ENCODE measurements at regions of chr17 and their contacts with region 1.

Region 1: GRCh38 chr17:36072431-36073121 is 8.5 kb downstream of the CCL18 start:
- DNase-seq: peak; percentile 39 to 72 (median 48)
- H3K4me3 ChIP-seq: no peak overlapping the region
- H3K27ac ChIP-seq: no peak overlapping the region
- H3K4me1 ChIP-seq: no peaks in the 10 kb centered on the region
- H3K27me3 ChIP-seq: no peaks in the 10 kb centered on the region
- CTCF ChIP-seq: peak; percentile 42 to 73 (median 60)
- POLR2A ChIP-seq: no peak

Region 2: GRCh38 chr17:35969558-35970380 is 102.8 kb before region 1 on chr17:
- intact Hi-C with region 1: loop called in 1 of 2 experiments (anchors 10 kb)
- DNase-seq: peak; percentile 71 to 94 (median 85)
- H3K4me3 ChIP-seq: no peak overlapping the region
- H3K27ac ChIP-seq: no peak overlapping the region
- H3K4me1 ChIP-seq: peaks cover 0 to 16% of the 10 kb centered on the region in 2 donors
- H3K27me3 ChIP-seq: no peaks in the 10 kb centered on the region
- CTCF ChIP-seq: peak; percentile 83 to 90 (median 86)
- POLR2A ChIP-seq: no peak

Region 3: GRCh38 chr17:36127199-36127893 is 54.8 kb after region 1 on chr17:
- intact Hi-C with region 1: loop called in 1 of 2 experiments (anchors 10 kb)
- DNase-seq: no peak
- H3K4me3 ChIP-seq: no peak overlapping the region
- H3K27ac ChIP-seq: no peak overlapping the region
- H3K4me1 ChIP-seq: no peaks in the 10 kb centered on the region
- H3K27me3 ChIP-seq: no peaks in the 10 kb centered on the region
- CTCF ChIP-seq: no peak
- POLR2A ChIP-seq: no peak

Measured in adrenal gland (tissue), 19 donors.